Mammary epithelial cell (primary cell): ENCODE measurements at regions of chr10 and their contacts with region 1.

Region 1: DNA sequence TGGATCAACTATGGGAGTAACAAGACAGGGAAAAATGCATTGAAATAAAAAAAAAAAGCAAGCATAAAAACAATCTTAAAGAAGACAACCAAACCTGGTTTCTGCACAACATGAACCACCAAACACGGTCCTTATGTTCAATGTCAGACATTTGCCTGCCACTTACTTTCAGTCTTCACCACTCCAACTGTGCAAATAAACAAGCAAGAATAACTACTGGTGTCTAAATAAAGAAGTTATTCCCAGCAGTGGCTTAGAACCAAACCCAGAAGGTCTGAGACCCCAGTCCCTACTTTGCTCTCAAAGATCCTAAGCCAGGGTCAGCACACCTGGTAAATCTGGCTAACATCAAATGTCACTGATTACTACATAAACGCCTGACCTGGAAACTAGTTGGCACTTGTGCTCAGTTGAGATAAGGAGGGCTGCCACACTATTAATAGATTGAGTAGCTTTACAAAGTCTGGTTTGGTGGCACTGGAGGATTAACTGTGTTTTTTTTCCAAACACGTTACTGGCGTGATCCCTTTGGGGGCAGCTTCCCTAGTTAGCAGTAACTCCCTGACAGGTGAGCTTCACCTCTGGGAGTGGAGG is 62.7 kb upstream of the ABLIM1 start:
- DNase-seq: no peak
- H3K4me3 ChIP-seq: no peak overlapping the region
- H3K27ac ChIP-seq: no peak overlapping the region
- H3K4me1 ChIP-seq: peaks cover 14% of the 10 kb centered on the region
- H3K27me3 ChIP-seq: no peaks in the 10 kb centered on the region
- CTCF ChIP-seq: no peak

Region 2: DNA sequence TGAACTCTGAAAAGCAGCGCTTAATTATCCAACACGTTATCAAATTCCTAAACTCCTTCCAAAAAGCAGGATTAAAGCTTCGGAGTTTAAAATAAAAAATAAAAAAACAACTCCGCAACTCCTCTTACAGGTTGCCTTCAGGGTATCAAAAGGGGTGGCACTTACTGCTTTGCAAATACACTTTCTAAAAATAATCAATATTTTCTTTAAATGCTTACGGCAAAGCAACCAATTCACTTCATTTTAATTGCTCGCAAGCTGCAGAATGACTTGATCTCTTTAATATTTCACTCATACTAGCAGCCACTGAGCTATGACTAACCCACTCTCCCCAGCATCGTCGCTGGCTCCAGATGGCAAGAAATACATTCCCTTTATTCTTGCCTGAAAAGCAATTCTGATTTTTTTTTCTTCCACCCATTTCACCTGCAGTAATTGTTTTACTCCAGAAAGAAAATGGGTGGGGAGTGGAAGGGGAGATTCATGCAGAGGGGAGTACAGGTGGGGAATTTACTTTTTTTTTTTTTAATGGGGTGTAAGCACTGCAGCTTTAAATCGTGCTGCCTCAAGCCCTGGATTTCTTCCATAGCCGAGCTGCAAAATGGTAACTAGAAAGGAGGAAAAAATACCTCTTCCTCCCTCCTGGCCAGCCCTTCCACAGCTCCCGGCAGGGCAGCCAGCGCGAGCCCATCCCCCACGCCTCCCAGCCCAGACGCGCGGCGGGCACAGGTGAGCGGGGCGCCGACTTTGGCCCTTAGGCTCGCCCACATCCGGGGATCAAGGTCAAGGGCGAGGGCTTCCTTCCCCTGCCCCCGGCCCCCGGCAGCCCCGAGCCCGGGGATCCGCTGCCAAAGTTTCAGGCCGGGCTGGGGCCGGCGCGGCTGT is 46.6 kb after region 1 on chr10:
- CTCF ChIA-PET with region 1: no interaction called
- dilution Hi-C with region 1: no loop called
- in situ Hi-C with region 1: no loop called
- intact Hi-C with region 1: loop called (anchors 5 kb)
- DNase-seq: peak; percentile 49
- H3K4me3 ChIP-seq: peak overlapping the region; percentile 64 to 77 (median 76)
- H3K27ac ChIP-seq: no peak overlapping the region
- H3K4me1 ChIP-seq: peaks cover 10% of the 10 kb centered on the region
- H3K27me3 ChIP-seq: peaks cover 3% of the 10 kb centered on the region
- CTCF ChIP-seq: no peak